Gastrocnemius medialis (tissue), 4 donors: ENCODE measurements at regions of chr20 and their contacts with region 1.

Region 1: DNA sequence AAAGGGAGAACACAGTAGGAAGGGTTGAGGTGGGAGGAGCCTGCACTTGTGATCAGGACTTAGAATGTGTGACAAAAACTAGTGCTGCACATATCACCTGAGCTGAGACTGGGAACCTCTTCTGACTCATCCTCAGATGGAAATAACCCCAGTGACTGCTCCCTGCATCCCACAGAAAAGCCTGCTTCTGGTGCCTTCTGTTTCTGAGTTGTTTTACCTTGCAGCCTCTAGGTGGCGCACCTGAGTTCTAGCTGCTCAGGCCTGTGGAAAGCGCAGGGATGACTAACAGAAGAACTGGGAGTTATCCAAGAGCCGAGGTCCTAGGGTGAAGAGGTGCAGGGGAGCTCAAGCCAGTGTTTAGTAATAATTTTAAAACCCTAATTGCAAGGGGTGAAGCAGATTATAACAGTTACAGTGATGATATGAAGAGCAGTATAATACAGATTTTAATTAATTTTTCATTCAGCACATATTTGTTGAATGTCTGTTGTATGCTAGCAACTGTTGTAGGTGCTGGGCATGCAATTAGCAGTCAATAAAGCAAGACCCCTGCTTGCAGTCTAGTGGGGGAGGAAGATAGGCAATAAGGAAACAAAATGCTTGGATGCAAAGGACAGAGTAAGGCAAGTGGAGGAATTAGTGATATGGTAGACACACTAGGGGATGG is 302.5 kb downstream of the DHX35 start:
- DNase-seq: peak; percentile 33 to 49
- ATAC-seq: peak; percentile 83 to 89
- H3K4me3 ChIP-seq: no peak overlapping the region
- H3K27ac ChIP-seq: no peak overlapping the region
- H3K4me1 ChIP-seq: no peaks in the 10 kb centered on the region
- H3K27me3 ChIP-seq: no peaks in the 10 kb centered on the region
- CTCF ChIP-seq: peak; percentile 53 to 82 (median 67)
- POLR2A ChIP-seq: no peak

Region 2: GRCh38 chr20:39112178-39112743 is 152.4 kb before region 1 on chr20:
- in situ Hi-C with region 1: no loop called
- intact Hi-C with region 1: loop called (anchors 10 kb)
- DNase-seq: peak; percentile 19 to 20
- ATAC-seq: peak; percentile 75 to 86
- H3K4me3 ChIP-seq: no peak overlapping the region
- H3K27ac ChIP-seq: no peak overlapping the region
- H3K4me1 ChIP-seq: peaks cover 0 to 5% of the 10 kb centered on the region in 2 donors
- H3K27me3 ChIP-seq: peaks cover 8 to 14% (median 8%) of the 10 kb centered on the region in 3 donors
- CTCF ChIP-seq: peak in 4 of 5 experiments; percentile 28 to 66 (median 62)
- POLR2A ChIP-seq: no peak

Region 3: DNA sequence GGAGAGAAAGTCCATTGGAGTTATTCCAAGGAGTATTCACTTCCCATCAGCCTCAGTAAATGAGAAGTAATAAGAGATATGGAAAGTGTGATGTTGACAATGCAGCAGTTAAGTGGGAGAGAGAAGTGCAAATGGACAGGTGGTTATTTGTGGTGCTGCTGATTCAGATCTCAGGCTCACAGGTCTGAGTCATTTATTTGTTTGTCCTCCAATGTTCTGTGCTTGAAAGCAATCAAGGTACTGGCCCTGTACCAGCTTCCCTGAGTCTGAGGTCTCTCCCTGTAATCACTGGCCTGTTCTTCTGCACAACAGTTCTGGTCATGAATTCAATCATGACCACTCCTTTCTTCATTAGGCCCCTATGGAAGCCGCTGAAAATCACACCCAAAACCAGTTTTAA is 596.7 kb after region 1 on chr20:
- in situ Hi-C with region 1: loop called in 2 of 4 experiments (anchors 10 to 25 kb)
- intact Hi-C with region 1: no loop called
- DNase-seq: peak in 1 of 2 donors; percentile 15
- ATAC-seq: peak; percentile 39 to 84
- H3K4me3 ChIP-seq: no peak overlapping the region
- H3K27ac ChIP-seq: no peak overlapping the region
- H3K4me1 ChIP-seq: no peaks in the 10 kb centered on the region
- H3K27me3 ChIP-seq: no peaks in the 10 kb centered on the region
- CTCF ChIP-seq: no peak
- POLR2A ChIP-seq: no peak

Region 4: DNA sequence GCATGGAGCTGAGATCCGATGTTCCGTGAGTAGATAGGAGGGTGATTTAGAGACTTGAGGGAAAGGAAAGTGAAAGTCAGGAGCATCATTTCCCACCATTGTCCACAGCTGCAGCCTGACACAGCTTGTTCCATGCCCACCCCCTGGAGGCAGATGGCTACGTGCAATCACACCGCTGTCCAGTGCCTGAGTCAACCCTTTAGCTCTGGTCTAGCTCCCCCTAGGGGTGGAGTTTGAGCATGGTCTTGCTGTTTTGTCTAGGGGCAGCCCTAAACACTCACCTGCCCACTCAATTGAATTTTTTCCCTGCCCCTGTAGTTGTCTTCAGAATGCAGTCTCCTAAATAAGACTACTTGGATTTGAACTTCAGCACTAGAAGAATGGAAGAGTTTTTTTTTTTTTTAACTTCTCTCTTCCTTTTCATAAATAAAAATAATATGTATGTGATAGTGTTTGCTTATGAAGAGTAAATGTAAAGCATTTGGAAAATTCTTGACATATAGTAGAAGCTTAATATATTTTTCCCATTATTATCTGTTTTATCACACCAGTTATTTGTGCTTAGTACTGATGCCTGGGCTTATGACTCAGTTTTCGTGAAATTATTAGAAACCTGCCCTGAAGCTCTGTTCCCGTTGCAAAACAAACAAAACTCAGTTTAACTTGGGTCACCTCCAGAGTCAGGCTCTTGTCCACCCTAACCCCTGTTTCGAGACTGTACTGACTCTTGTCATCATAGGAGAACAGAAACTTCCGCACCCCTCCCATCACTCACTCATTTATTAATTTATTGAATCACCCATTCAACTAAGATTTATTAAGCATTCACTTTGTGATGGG is 609.6 kb after region 1 on chr20:
- in situ Hi-C with region 1: loop called (anchors 10 to 25 kb)
- intact Hi-C with region 1: no loop called
- DNase-seq: peak; percentile 46 to 64
- ATAC-seq: peak; percentile 56 to 85
- H3K4me3 ChIP-seq: no peak overlapping the region
- H3K27ac ChIP-seq: no peak overlapping the region
- H3K4me1 ChIP-seq: peaks cover 17 to 23% of the 10 kb centered on the region in 2 donors
- H3K27me3 ChIP-seq: no peaks in the 10 kb centered on the region
- CTCF ChIP-seq: peak; percentile 49 to 73 (median 61)
- POLR2A ChIP-seq: no peak

Region 5: GRCh38 chr20:39885975-39886649 is 621.5 kb after region 1 on chr20:
- in situ Hi-C with region 1: loop called in 2 of 4 experiments (anchors 25 kb)
- intact Hi-C with region 1: no loop called
- DNase-seq: peak; percentile 33 to 70
- ATAC-seq: peak; percentile 63 to 82
- H3K4me3 ChIP-seq: no peak overlapping the region
- H3K27ac ChIP-seq: no peak overlapping the region
- H3K4me1 ChIP-seq: no peaks in the 10 kb centered on the region
- H3K27me3 ChIP-seq: no peaks in the 10 kb centered on the region
- CTCF ChIP-seq: peak in 4 of 5 experiments; percentile 57 to 69 (median 63)
- POLR2A ChIP-seq: no peak

Region 6: GRCh38 chr20:40563296-40563944 is 1298.8 kb after region 1 on chr20:
- in situ Hi-C with region 1: no loop called
- intact Hi-C with region 1: no loop called
- DNase-seq: peak in 1 of 2 donors; percentile 18
- ATAC-seq: no peak
- H3K4me3 ChIP-seq: no peak overlapping the region
- H3K27ac ChIP-seq: no peak overlapping the region
- H3K4me1 ChIP-seq: no peaks in the 10 kb centered on the region
- H3K27me3 ChIP-seq: no peaks in the 10 kb centered on the region
- CTCF ChIP-seq: no peak
- POLR2A ChIP-seq: no peak

Region 7: DNA sequence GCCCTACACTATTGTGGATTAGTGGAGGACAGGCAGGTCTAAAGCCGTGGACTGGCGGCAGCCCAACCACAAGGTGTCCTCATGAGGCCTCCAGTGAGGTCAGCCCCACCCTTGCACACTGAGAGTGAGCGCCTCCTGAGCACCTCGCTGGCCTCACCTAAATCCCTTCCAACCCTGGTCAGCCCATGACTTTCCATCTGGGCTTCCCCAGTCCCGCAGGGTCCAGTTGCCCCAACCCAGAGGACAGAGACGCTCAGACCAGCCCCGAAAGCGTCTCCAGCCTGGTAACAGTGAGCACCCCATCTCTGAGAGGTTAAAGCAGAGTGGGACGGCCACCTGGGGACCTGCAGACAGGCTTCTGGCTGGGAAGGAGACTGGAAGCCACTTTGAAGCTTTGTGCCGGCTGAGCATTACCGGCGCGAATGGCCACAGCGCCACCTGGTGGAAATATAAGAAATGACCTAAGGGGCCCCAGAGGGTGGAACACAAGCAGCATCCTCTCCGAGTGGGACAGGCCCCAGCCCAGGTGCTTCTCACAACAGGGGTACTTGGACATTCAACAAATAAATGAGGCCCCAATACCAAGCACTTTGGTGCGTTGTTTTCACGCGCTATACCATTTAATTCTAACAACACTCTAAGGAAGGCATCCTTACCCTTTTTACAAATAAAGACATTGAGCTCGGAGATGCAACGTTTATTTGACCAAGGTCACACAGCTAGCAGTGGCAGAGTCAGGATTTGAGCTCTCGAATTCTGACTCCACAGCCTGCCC is 1698.3 kb after region 1 on chr20:
- in situ Hi-C with region 1: no loop called
- intact Hi-C with region 1: loop called (anchors 2 kb)
- DNase-seq: peak; percentile 18 to 48
- ATAC-seq: peak; percentile 73 to 92
- H3K4me3 ChIP-seq: no peak overlapping the region
- H3K27ac ChIP-seq: no peak overlapping the region
- H3K4me1 ChIP-seq: no peaks in the 10 kb centered on the region
- H3K27me3 ChIP-seq: no peaks in the 10 kb centered on the region
- CTCF ChIP-seq: peak; percentile 74 to 92 (median 83)
- POLR2A ChIP-seq: no peak